CD4-positive, alpha-beta T cell (primary cell): ENCODE measurements at regions of chr19 and their contacts with region 1.

Region 1: GRCh38 chr19:14571695-14572490 is at the start of gene NDUFB7:
- DNase-seq: peak; percentile 75 to 97 (median 85)
- ATAC-seq: peak; percentile 92
- H3K4me3 ChIP-seq: peak within 1 kb of the TSS; percentile 84
- H3K4me3 Mint-ChIP-seq: peak within 1 kb of the TSS; percentile 96
- H3K27ac ChIP-seq: peak within 1 kb of the TSS; percentile 0 to 29
- H3K27ac Mint-ChIP-seq: peak within 1 kb of the TSS; percentile 89
- H3K4me1 ChIP-seq: peaks cover 40% of the 10 kb centered on the region
- H3K4me1 Mint-ChIP-seq: peaks cover 32% of the 10 kb centered on the region
- H3K27me3 ChIP-seq: no peaks in the 10 kb centered on the region
- H3K27me3 Mint-ChIP-seq: no peaks in the 10 kb centered on the region
- CTCF ChIP-seq: peak; percentile 83
- total RNA-seq, gene NDUFB7: 31.7 to 39.1 TPM

Region 2: DNA sequence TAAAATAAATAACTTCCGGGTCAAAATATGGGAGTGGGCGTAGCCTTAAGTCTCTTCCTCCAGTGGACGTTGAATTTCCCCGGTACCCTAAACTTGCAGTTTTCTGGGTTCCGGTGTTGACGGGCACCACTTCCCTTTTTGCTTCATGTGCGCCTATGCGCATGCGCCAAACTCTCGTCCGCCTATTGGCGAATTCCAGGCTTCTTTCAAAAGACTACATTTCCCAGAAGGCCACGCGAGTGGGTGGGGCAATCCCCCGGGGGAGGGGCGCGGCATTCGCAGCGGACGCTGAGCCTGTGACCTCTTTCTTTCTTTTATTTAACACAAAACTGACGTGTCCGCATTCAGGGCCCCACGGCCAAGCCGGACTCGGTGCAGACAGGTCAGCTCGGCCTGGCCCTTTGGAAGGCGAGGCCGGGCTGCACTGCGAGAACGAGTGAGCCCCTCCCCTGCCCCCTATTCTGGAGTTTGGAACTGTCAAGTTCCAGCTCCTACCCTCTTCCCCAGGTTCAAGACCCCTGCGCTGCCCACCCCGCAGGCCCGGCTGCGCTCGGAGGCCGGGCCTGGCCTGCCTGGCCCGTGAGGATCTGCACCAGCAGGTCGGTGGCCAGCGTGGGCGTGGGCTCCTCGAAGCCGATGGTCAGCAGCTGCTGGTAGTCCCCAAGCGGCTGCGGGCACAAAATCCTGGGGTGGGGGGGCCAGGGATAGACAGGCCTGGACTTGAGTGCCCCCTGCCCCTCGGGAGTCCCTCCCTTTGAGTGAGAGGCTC is 490.4 kb before region 1 on chr19:
- CTCF ChIA-PET with region 1: no interaction called
- POLR2A ChIA-PET with region 1: no interaction called
- intact Hi-C with region 1: loop called in 1 of 2 experiments (anchors 5 kb)
- DNase-seq: peak; percentile 98 to 100 (median 99)
- ATAC-seq: peak; percentile 94
- H3K4me3 ChIP-seq: peak overlapping the region; percentile 81
- H3K4me3 Mint-ChIP-seq: peak overlapping the region; percentile 91
- H3K27ac ChIP-seq: peak overlapping the region; percentile 73 to 74
- H3K27ac Mint-ChIP-seq: peak overlapping the region; percentile 73
- H3K4me1 ChIP-seq: peaks cover 23% of the 10 kb centered on the region
- H3K4me1 Mint-ChIP-seq: peaks cover 14% of the 10 kb centered on the region
- H3K27me3 ChIP-seq: no peaks in the 10 kb centered on the region
- H3K27me3 Mint-ChIP-seq: no peaks in the 10 kb centered on the region
- CTCF ChIP-seq: no peak

Region 3: GRCh38 chr19:14556662-14557188 is 15.2 kb before region 1 on chr19:
- CTCF ChIA-PET with region 1: interaction called, 28 read pairs
- POLR2A ChIA-PET with region 1: interaction called, 3 read pairs
- intact Hi-C with region 1: no loop called
- DNase-seq: peak; percentile 52 to 88 (median 66)
- ATAC-seq: peak; percentile 83
- H3K4me3 ChIP-seq: peak overlapping the region; percentile 28
- H3K4me3 Mint-ChIP-seq: peak overlapping the region; percentile 66
- H3K27ac ChIP-seq: no peak overlapping the region
- H3K27ac Mint-ChIP-seq: peak overlapping the region; percentile 81
- H3K4me1 ChIP-seq: peaks cover 78% of the 10 kb centered on the region
- H3K4me1 Mint-ChIP-seq: peaks cover 39% of the 10 kb centered on the region
- H3K27me3 ChIP-seq: no peaks in the 10 kb centered on the region
- H3K27me3 Mint-ChIP-seq: no peaks in the 10 kb centered on the region
- CTCF ChIP-seq: peak; percentile 96

Region 4: GRCh38 chr19:14689598-14690503 is 118.0 kb after region 1 on chr19 and contains the start of gene ZNF333:
- CTCF ChIA-PET with region 1: interaction called, 74 read pairs
- POLR2A ChIA-PET with region 1: interaction called, 7 read pairs
- intact Hi-C with region 1: loop called (anchors 1 kb)
- DNase-seq: peak; percentile 94 to 99 (median 98)
- ATAC-seq: peak; percentile 88
- H3K4me3 ChIP-seq: peak within 1 kb of the TSS; percentile 81
- H3K4me3 Mint-ChIP-seq: peak within 1 kb of the TSS; percentile 96
- H3K27ac ChIP-seq: peak within 1 kb of the TSS; percentile 87 to 98
- H3K27ac Mint-ChIP-seq: peak within 1 kb of the TSS; percentile 99
- H3K4me1 ChIP-seq: peaks cover 19% of the 10 kb centered on the region
- H3K4me1 Mint-ChIP-seq: peaks cover 31% of the 10 kb centered on the region
- H3K27me3 ChIP-seq: no peaks in the 10 kb centered on the region
- H3K27me3 Mint-ChIP-seq: no peaks in the 10 kb centered on the region
- CTCF ChIP-seq: no peak
- total RNA-seq, gene ZNF333: 15.5 to 17.6 TPM

Region 5: GRCh38 chr19:14890643-14891379 is 318.9 kb after region 1 on chr19:
- CTCF ChIA-PET with region 1: no interaction called
- POLR2A ChIA-PET with region 1: no interaction called
- intact Hi-C with region 1: loop called in 1 of 2 experiments (anchors 1 kb)
- DNase-seq: no peak
- ATAC-seq: no peak
- H3K4me3 ChIP-seq: no peak overlapping the region
- H3K4me3 Mint-ChIP-seq: no peak overlapping the region
- H3K27ac ChIP-seq: no peak overlapping the region
- H3K27ac Mint-ChIP-seq: no peak overlapping the region
- H3K4me1 ChIP-seq: peaks cover 3% of the 10 kb centered on the region
- H3K4me1 Mint-ChIP-seq: no peaks in the 10 kb centered on the region
- H3K27me3 ChIP-seq: peaks cover 0 to 37% of the 10 kb centered on the region in 2 experiments
- H3K27me3 Mint-ChIP-seq: peaks cover 35% of the 10 kb centered on the region
- CTCF ChIP-seq: no peak